CD4-positive, alpha-beta memory T cell (primary cell): ENCODE measurements at regions of chr20 and their contacts with region 1.

Region 1: DNA sequence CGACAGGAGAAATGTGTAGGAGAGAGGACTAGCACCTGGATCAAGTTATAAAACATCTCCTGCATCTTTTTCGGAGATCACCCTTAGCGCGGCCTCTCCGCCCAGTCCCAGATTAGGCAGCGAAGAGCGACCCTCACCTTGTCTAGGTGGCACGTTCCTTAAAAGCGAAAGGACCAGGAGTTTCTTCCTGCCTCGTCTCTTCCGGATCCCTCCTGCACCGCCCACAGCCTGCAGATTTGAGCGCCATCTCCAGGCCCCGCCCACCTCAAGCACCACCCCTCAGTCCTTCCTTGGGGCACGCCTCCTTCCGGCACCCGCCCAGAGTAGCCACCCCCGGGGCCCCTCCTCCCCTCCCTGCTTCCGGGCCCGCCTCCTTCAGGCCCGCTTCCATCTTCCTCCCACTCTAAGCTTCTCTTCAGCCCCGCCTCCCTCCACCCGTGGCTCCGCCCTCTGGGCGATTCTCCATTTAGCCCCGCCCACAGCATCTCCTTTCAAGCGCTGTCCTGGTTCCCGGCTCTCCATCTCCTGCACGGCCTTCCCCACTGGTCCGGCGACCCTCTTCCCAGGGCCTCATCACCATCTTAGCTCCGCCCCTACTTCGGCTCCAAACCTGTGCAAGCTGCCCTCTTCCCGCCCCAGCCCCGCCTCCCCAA is 662 bp upstream of the RALY start:
- DNase-seq: peak; percentile 99 to 100 (median 100)
- H3K4me3 ChIP-seq: peak overlapping the region; percentile 77 to 89
- H3K4me3 Mint-ChIP-seq: peak overlapping the region; percentile 96 to 99 (median 98)
- H3K27ac ChIP-seq: peak overlapping the region; percentile 94
- H3K27ac Mint-ChIP-seq: peak overlapping the region; percentile 99 to 100 (median 99)
- H3K4me1 ChIP-seq: peaks cover 58% of the 10 kb centered on the region
- H3K4me1 Mint-ChIP-seq: peaks cover 41 to 72% (median 53%) of the 10 kb centered on the region in 4 donors
- H3K27me3 ChIP-seq: no peaks in the 10 kb centered on the region
- H3K27me3 Mint-ChIP-seq: peaks cover 0 to 2% of the 10 kb centered on the region in 2 donors

Region 2: GRCh38 chr20:33443512-33444239 is 549.4 kb before region 1 on chr20 and contains the start of gene SNTA1:
- CTCF ChIA-PET with region 1: no interaction called
- POLR2A ChIA-PET with region 1: no interaction called
- intact Hi-C with region 1: loop called (anchors 1 kb)
- DNase-seq: peak; percentile 80 to 88 (median 81)
- H3K4me3 ChIP-seq: peak within 1 kb of the TSS; percentile 42 to 85
- H3K4me3 Mint-ChIP-seq: peak within 1 kb of the TSS; percentile 92 to 97 (median 92)
- H3K27ac ChIP-seq: peak within 1 kb of the TSS; percentile 74
- H3K27ac Mint-ChIP-seq: peak within 1 kb of the TSS; percentile 90 to 97 (median 94)
- H3K4me1 ChIP-seq: peaks cover 17% of the 10 kb centered on the region
- H3K4me1 Mint-ChIP-seq: peaks cover 14 to 28% (median 22%) of the 10 kb centered on the region in 4 donors
- H3K27me3 ChIP-seq: no peaks in the 10 kb centered on the region
- H3K27me3 Mint-ChIP-seq: no peaks in the 10 kb centered on the region
- total RNA-seq, gene SNTA1: 5.1 to 5.7 TPM

Region 3: GRCh38 chr20:33731693-33732165 is 261.3 kb before region 1 on chr20 and contains the start of gene ZNF341:
- CTCF ChIA-PET with region 1: no interaction called
- POLR2A ChIA-PET with region 1: interaction called, 17 read pairs
- intact Hi-C with region 1: loop called (anchors 1 kb)
- DNase-seq: peak in 4 of 5 donors; percentile 88 to 91 (median 90)
- H3K4me3 ChIP-seq: peak within 1 kb of the TSS; percentile 64 to 69
- H3K4me3 Mint-ChIP-seq: peak within 1 kb of the TSS; percentile 89 to 94 (median 93)
- H3K27ac ChIP-seq: peak within 1 kb of the TSS; percentile 64
- H3K27ac Mint-ChIP-seq: peak within 1 kb of the TSS; percentile 92 to 98 (median 96)
- H3K4me1 ChIP-seq: peaks cover 21% of the 10 kb centered on the region
- H3K4me1 Mint-ChIP-seq: peaks cover 10 to 25% (median 19%) of the 10 kb centered on the region in 4 donors
- H3K27me3 ChIP-seq: no peaks in the 10 kb centered on the region
- H3K27me3 Mint-ChIP-seq: no peaks in the 10 kb centered on the region
- total RNA-seq, gene ZNF341: 4.8 to 5.0 TPM

Region 4: GRCh38 chr20:33933469-33933909 is 59.6 kb before region 1 on chr20:
- CTCF ChIA-PET with region 1: no interaction called
- POLR2A ChIA-PET with region 1: no interaction called
- intact Hi-C with region 1: no loop called
- DNase-seq: peak; percentile 50 to 63 (median 58)
- H3K4me3 ChIP-seq: no peak overlapping the region
- H3K4me3 Mint-ChIP-seq: no peak overlapping the region
- H3K27ac ChIP-seq: no peak overlapping the region
- H3K27ac Mint-ChIP-seq: peak overlapping the region in 2 of 7 donors; percentile 47 to 48
- H3K4me1 ChIP-seq: no peaks in the 10 kb centered on the region
- H3K4me1 Mint-ChIP-seq: peaks cover 0 to 2% (median 0%) of the 10 kb centered on the region in 4 donors
- H3K27me3 ChIP-seq: no peaks in the 10 kb centered on the region
- H3K27me3 Mint-ChIP-seq: no peaks in the 10 kb centered on the region

Region 5: DNA sequence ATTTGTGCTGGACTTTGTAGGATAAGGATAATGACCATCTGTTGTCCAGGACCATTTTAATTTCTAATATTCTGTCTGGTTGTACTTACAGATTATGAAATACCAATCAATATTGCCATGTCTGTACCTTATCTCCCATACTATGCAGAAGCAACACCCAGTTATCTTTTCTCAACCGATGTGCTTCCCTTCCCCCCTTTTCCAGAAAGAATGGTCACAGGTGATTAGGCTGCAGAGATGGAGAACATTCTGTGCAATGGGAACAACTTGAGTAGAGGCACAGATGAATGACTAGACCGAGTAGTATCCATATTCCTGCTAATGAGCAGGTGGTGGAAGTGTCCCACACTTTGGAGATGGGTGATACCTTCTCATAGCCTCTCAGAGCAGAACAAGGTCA is 11.2 kb after region 1 on chr20:
- CTCF ChIA-PET with region 1: no interaction called
- POLR2A ChIA-PET with region 1: interaction called, 12 read pairs
- intact Hi-C with region 1: loop called (anchors 2 kb)
- DNase-seq: no peak
- H3K4me3 ChIP-seq: no peak overlapping the region
- H3K4me3 Mint-ChIP-seq: peak overlapping the region in 2 of 8 donors; percentile 18 to 47
- H3K27ac ChIP-seq: no peak overlapping the region
- H3K27ac Mint-ChIP-seq: peak overlapping the region in 1 of 7 donors; percentile 85
- H3K4me1 ChIP-seq: peaks cover 79% of the 10 kb centered on the region
- H3K4me1 Mint-ChIP-seq: peaks cover 76 to 95% (median 85%) of the 10 kb centered on the region in 4 donors
- H3K27me3 ChIP-seq: no peaks in the 10 kb centered on the region
- H3K27me3 Mint-ChIP-seq: no peaks in the 10 kb centered on the region

Region 6: DNA sequence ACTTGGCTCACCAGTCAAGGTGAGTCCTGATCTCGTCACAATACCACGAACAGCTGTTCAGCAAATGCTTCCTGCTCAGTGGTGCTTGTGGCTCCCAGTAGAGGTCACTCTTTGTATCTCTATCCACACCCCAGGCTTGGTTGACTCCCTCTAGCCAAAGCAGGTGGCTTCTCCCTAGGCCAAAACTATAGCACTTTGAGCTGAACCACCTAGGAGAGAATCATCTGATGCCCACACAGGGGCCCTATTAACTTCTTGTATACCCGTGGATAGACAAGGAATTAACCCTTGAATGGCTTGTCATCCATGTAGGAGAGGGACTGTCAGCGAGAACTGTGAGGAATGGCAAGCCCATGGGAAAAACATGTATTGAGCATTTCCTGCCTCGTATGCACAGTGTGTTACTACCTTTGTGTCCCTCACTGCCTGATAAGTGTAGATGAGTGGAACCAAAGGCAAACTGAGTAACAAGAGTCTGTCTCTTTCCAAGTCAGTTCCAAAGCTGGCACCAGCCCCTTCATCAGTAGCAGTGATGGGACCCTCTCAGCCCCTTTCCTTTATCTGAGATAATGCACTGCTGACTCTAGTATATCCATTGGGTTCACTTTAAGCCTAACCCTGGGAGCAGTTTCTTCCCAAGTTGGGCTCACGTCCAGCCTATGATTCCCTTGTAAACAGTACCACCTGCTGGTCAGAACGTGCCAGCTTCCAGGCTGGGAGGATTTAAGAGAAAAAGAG is 76.5 kb after region 1 on chr20:
- CTCF ChIA-PET with region 1: interaction called, 6 read pairs
- POLR2A ChIA-PET with region 1: interaction called, 10 read pairs
- intact Hi-C with region 1: no loop called
- DNase-seq: peak; percentile 50 to 75 (median 54)
- H3K4me3 ChIP-seq: no peak overlapping the region
- H3K4me3 Mint-ChIP-seq: peak overlapping the region in 1 of 8 donors; percentile 20
- H3K27ac ChIP-seq: no peak overlapping the region
- H3K27ac Mint-ChIP-seq: peak overlapping the region; percentile 10 to 88 (median 73)
- H3K4me1 ChIP-seq: peaks cover 17% of the 10 kb centered on the region
- H3K4me1 Mint-ChIP-seq: peaks cover 26 to 44% (median 35%) of the 10 kb centered on the region in 4 donors
- H3K27me3 ChIP-seq: no peaks in the 10 kb centered on the region
- H3K27me3 Mint-ChIP-seq: no peaks in the 10 kb centered on the region

Region 7: GRCh38 chr20:34302723-34303528 is 309.9 kb after region 1 on chr20 and contains the start of gene AHCY:
- CTCF ChIA-PET with region 1: no interaction called
- POLR2A ChIA-PET with region 1: no interaction called
- intact Hi-C with region 1: loop called (anchors 2 kb)
- DNase-seq: peak; percentile 90 to 95 (median 93)
- H3K4me3 ChIP-seq: peak within 1 kb of the TSS; percentile 86 to 94
- H3K4me3 Mint-ChIP-seq: peak within 1 kb of the TSS; percentile 90 to 98 (median 95)
- H3K27ac ChIP-seq: peak within 1 kb of the TSS; percentile 81
- H3K27ac Mint-ChIP-seq: peak within 1 kb of the TSS; percentile 87 to 98 (median 97)
- H3K4me1 ChIP-seq: peaks cover 11% of the 10 kb centered on the region
- H3K4me1 Mint-ChIP-seq: peaks cover 9 to 26% (median 10%) of the 10 kb centered on the region in 4 donors
- H3K27me3 ChIP-seq: no peaks in the 10 kb centered on the region
- H3K27me3 Mint-ChIP-seq: no peaks in the 10 kb centered on the region
- total RNA-seq, gene AHCY: 23.1 to 24.2 TPM